ENCODE measurements at regions of chr1 and their contacts with region 1.

Region 1: GRCh38 chr1:84753516-84754385 is 63.5 kb upstream of the SSX2IP start:
- DNase-seq: peak; percentile 88
- ATAC-seq: peak; percentile 87
- H3K4me3 Mint-ChIP-seq: no peak overlapping the region
- H3K27ac Mint-ChIP-seq: no peak overlapping the region
- H3K4me1 Mint-ChIP-seq: peaks cover 14% of the 10 kb centered on the region
- H3K27me3 Mint-ChIP-seq: peaks cover 10% of the 10 kb centered on the region

Region 2: DNA sequence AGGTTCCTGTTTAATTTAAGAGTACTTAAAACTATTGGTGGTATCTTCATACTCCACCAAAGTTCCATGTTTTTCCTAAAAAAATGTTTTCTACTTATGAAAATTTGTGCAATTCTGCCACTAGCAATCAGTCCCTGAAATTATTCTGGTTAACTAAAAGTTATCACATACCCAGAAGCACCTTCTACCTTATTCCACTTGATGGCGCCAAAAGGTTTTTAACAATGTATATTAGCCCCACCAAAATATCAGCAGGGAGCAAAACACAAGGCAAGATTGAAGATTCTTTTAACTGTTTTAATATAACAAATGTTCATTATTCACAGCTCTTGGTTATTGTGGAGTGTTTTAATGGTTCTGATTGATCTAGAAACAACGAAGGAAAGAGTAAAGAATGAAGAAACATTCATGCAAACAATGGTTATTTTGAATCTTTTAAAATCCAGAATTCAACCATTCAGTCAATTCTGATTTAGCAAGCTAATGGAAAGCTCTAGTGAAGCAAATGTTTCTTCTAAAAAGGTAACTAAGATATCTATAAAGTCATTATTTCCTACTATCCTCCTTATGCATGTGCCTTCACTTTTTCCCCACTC is 822.0 kb before region 1 on chr1:
- CTCF ChIA-PET with region 1: interaction called, 6 read pairs
- POLR2A ChIA-PET with region 1: no interaction called
- intact Hi-C with region 1: loop called in 1 of 2 experiments (anchors 5 kb)
- DNase-seq: peak; percentile 11
- ATAC-seq: peak; percentile 58
- H3K4me3 Mint-ChIP-seq: no peak overlapping the region
- H3K27ac Mint-ChIP-seq: no peak overlapping the region
- H3K4me1 Mint-ChIP-seq: no peaks in the 10 kb centered on the region
- H3K27me3 Mint-ChIP-seq: no peaks in the 10 kb centered on the region

Region 3: GRCh38 chr1:84433258-84434080 is 320.3 kb before region 1 on chr1:
- CTCF ChIA-PET with region 1: interaction called, 29 read pairs
- POLR2A ChIA-PET with region 1: no interaction called
- intact Hi-C with region 1: no loop called
- DNase-seq: peak; percentile 65
- ATAC-seq: peak; percentile 76
- H3K4me3 Mint-ChIP-seq: peak overlapping the region; percentile 48
- H3K27ac Mint-ChIP-seq: peak overlapping the region; percentile 32
- H3K4me1 Mint-ChIP-seq: peaks cover 18% of the 10 kb centered on the region
- H3K27me3 Mint-ChIP-seq: no peaks in the 10 kb centered on the region

Region 4: DNA sequence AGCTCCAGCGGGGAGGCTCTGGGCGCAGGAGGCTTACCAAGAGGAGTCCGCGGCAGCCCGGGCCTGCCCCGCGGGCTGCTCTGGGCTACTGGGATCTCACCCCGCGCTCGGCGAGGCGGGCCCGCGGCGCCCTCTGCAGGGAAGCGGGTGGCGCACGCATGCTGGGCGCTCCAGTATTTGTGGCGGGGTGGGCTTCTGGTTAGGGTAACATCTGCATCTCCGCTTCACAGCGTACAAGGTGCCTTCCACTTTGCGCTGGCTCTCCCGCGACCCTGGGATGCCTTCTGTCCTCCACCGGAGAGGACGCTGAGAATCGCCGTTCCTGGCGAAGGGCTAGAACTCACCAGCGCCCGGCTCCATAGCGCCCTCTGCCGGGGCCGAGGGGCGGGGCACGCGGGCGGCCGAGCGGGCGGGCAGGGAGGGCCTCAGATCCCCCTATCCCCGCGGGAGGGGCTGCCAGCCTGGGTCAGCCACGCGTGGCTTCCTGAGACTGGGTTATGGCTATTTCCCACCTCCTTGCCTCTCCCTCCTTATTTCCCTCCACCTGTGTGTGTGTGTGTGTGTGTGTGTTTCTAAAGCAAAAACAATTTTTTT is 132.9 kb before region 1 on chr1:
- CTCF ChIA-PET with region 1: interaction called, 10 read pairs
- POLR2A ChIA-PET with region 1: no interaction called
- intact Hi-C with region 1: loop called (anchors 1 to 2 kb)
- DNase-seq: peak; percentile 91
- ATAC-seq: peak; percentile 90
- H3K4me3 Mint-ChIP-seq: peak overlapping the region; percentile 80
- H3K27ac Mint-ChIP-seq: peak overlapping the region; percentile 91
- H3K4me1 Mint-ChIP-seq: peaks cover 20% of the 10 kb centered on the region
- H3K27me3 Mint-ChIP-seq: no peaks in the 10 kb centered on the region

Region 5: DNA sequence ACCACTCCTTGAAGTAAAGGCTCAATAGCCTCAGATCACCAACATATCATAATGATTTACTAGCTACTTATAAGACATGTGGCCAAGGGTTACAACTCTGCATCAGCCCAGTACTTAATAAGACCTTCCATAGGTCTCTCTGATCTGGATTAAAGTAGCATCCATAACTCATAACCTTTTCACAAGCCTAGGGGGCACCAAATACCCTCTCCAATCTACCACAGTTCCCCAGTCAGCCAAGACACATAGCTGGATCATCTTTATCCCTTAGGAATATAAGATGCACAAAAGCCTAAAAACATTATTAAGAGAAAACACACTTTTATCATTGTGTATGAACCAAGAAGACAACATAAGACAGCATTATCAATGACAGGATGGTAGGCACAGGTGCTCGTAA is 85.6 kb before region 1 on chr1:
- CTCF ChIA-PET with region 1: interaction called, 15 read pairs
- POLR2A ChIA-PET with region 1: no interaction called
- intact Hi-C with region 1: loop called in 1 of 2 experiments (anchors 2 kb)
- DNase-seq: no peak
- ATAC-seq: no peak
- H3K4me3 Mint-ChIP-seq: no peak overlapping the region
- H3K27ac Mint-ChIP-seq: no peak overlapping the region
- H3K4me1 Mint-ChIP-seq: peaks cover 5% of the 10 kb centered on the region
- H3K27me3 Mint-ChIP-seq: no peaks in the 10 kb centered on the region

Region 6: DNA sequence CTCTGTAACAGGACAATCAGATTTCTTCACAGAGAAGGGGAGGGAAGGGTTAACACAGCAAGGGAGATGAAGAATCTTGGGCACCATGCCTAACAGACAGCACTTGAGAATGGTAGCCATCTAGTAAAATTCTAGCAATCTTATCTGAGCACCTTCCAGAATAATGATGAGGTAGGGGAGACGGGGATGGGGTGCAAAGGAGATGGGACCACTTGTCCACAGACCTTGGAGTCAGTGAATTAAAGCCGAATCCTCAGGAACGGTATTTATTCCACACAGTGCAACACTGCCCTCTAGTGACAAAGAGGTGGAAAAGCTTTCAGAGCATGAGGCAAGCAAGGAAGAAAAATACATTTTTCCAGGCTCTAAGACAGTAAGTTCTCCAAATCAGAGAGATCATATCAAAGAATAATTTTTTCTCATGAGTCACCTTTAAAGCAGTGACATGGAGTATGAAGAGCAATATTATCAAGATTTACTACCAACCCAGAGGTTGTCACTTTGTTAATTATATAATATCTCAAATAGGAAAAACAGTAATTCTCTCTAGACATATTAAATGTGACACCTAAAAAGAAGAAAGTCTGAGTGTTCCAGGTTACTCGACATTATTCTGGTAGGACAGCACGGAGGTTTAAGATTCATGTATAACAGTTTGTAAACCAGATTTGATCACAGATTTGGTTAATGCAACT is 182.5 kb after region 1 on chr1:
- CTCF ChIA-PET with region 1: interaction called, 10 read pairs
- POLR2A ChIA-PET with region 1: no interaction called
- intact Hi-C with region 1: loop called (anchors 5 kb)
- DNase-seq: peak; percentile 25
- ATAC-seq: peak; percentile 53
- H3K4me3 Mint-ChIP-seq: no peak overlapping the region
- H3K27ac Mint-ChIP-seq: no peak overlapping the region
- H3K4me1 Mint-ChIP-seq: peaks cover 4% of the 10 kb centered on the region
- H3K27me3 Mint-ChIP-seq: no peaks in the 10 kb centered on the region

Measured in activated CD4-positive, alpha-beta T cell treated with anti-CD3 and anti-CD28 coated beads for 36 hours (primary cell).